Head of caudate nucleus (tissue), 42 donors: ENCODE measurements at regions of chrX and their contacts with region 1.

Region 1: GRCh38 chrX:49269010-49269767 is 404 bp upstream of the PPP1R3F start:
- DNase-seq: peak; percentile 90 to 99 (median 97)

Region 2: DNA sequence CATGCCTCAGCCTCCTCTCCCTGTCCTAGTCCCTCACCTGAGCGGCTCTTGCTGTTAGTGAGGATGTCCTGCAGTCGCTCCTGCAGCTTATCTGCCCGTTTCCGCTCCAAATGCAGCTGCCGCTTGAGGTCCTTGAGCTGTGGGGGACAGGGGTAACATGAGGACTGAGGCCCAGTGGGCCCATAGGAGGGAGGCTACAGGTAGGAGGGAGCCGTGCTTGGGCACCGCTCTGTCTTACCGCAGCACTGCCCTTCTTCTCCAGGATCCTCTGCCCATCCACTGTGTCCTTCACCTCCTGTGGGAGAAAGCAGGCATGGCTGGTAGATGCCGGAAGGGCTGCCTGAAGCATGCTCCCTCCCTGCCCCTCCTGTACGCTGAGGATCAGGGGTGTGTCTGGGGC is 288.0 kb before region 1 on chrX:
- intact Hi-C with region 1: no loop called
- DNase-seq: no peak

Region 3: GRCh38 chrX:49199906-49200771 is 69.0 kb before region 1 on chrX and contains the start of gene SYP:
- intact Hi-C with region 1: loop called (anchors 5 kb)
- DNase-seq: peak; percentile 73 to 95 (median 89)